Panc1 (cell line): ENCODE measurements at regions of chr3 and their contacts with region 1.

Region 1: GRCh38 chr3:100155128-100155527 is 40.8 kb upstream of the FILIP1L start:
- DNase-seq: no peak
- ATAC-seq: no peak
- H3K4me3 ChIP-seq: no peak overlapping the region
- H3K27ac ChIP-seq: no peak overlapping the region
- H3K4me1 ChIP-seq: no peaks in the 10 kb centered on the region
- H3K27me3 ChIP-seq: no peaks in the 10 kb centered on the region
- CTCF ChIP-seq: no peak

Region 2: GRCh38 chr3:100008081-100008698 is 146.9 kb before region 1 on chr3:
- CTCF ChIA-PET with region 1: no interaction called
- POLR2A ChIA-PET with region 1: interaction called, 14 read pairs
- in situ Hi-C with region 1: no loop called
- intact Hi-C with region 1: no loop called
- DNase-seq: no peak
- ATAC-seq: no peak
- H3K4me3 ChIP-seq: no peak overlapping the region
- H3K27ac ChIP-seq: peak overlapping the region; percentile 29; the same call in 1 of the 2 replicates
- H3K4me1 ChIP-seq: peaks cover 19% of the 10 kb centered on the region
- H3K27me3 ChIP-seq: no peaks in the 10 kb centered on the region
- CTCF ChIP-seq: no peak

Region 3: DNA sequence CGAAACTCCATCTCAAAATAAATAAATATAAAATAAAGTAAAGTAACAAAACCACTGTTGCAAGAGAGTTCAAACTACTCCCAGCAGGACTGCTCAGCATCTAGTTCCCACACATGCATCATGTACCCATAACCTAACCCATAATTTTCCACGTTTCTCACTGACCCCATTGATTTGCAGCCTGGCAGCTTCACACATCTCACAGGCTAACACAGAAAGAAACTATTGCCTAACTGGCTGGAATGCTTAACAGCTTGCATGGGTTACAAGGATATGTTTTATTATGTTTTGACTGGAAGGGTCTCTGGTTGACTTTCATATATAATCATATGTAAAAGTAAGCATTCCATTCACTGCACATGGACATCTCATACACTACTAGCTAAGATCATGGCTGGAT is 50.0 kb after region 1 on chr3:
- CTCF ChIA-PET with region 1: no interaction called
- POLR2A ChIA-PET with region 1: no interaction called
- in situ Hi-C with region 1: no loop called
- intact Hi-C with region 1: no loop called
- DNase-seq: no peak
- ATAC-seq: no peak
- H3K4me3 ChIP-seq: no peak overlapping the region
- H3K27ac ChIP-seq: no peak overlapping the region
- H3K4me1 ChIP-seq: no peaks in the 10 kb centered on the region
- H3K27me3 ChIP-seq: no peaks in the 10 kb centered on the region
- CTCF ChIP-seq: no peak